ENCODE measurements at regions of chr16 and their contacts with region 1.

Region 1: DNA sequence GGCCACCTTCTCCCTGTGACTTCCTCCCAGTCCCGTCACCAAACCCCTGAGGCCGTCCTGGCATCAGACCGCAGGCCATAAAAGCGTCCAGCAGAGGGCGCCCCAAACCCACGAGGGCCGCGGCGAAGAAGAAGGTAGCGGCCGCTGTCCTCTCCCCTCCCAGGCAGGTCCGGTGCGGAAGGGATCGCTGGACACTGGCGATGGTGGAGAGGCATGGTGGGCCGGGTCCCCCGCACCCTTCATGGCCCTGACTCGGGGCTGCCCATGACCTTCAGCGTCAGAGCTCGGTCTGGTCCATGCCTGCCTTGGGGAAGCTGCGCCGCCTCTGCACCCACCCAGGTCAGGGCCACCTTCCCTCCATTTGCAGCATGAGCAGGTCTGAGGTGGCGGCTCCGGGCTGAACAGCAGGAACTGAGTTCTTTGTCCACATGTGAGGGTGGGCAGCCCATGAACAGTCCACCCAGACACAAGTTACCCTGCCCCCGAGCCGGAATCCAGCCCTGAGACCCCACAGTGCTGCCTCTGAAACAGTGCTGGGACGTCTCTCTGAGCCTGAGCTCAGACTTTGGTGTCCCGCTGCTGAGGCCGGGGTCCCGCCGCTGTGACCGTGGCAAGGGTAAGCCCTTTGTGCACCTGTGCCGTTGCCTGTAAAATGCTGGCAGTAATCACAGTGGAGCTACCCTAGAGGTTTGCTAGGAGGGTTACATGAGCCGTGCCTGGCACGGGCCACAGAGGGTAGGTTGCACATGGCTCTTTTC is 40.8 kb upstream of the CMIP start:
- DNase-seq: no peak
- H3K4me3 ChIP-seq: peak overlapping the region in 1 of 2 donors; percentile 40
- H3K27ac ChIP-seq: no peak overlapping the region
- H3K4me1 ChIP-seq: peaks cover 10% of the 10 kb centered on the region
- H3K27me3 ChIP-seq: no peaks in the 10 kb centered on the region
- CTCF ChIP-seq: peak; percentile 90 to 95 (median 93)
- POLR2A ChIP-seq: no peak

Region 2: DNA sequence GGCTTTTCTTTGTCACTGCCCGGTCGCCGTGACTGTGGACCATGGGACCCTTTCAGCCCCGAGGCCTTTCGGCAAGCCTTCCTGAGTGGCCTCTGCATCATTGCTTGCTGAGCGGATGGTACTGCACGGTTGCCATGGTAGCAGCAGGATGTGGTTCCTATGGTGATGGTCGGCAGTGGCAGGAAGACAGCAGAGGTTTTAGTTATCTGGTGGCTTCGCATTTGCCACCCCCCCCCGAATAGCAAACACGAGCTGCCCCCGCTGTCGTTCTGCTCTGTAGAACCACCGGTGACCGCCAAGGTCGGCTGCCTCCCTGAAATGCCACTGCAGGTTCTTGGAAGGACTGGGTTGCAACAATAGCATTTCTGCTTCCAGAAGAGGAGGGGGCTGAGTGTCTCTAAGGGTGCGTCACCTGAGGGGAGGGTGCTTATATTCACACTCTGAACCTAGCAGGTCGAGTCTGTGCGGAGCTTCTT is 117.4 kb after region 1 on chr16:
- intact Hi-C with region 1: no loop called
- DNase-seq: no peak
- H3K4me3 ChIP-seq: no peak overlapping the region
- H3K27ac ChIP-seq: no peak overlapping the region
- H3K4me1 ChIP-seq: peaks cover 54% of the 10 kb centered on the region
- H3K27me3 ChIP-seq: no peaks in the 10 kb centered on the region
- CTCF ChIP-seq: no peak
- POLR2A ChIP-seq: no peak

Region 3: GRCh38 chr16:81616321-81617055 is 212.7 kb after region 1 on chr16:
- intact Hi-C with region 1: loop called (anchors 10 kb)
- DNase-seq: no peak
- H3K4me3 ChIP-seq: no peak overlapping the region
- H3K27ac ChIP-seq: peak overlapping the region; percentile 77
- H3K4me1 ChIP-seq: peaks cover 84% of the 10 kb centered on the region
- H3K27me3 ChIP-seq: no peaks in the 10 kb centered on the region
- CTCF ChIP-seq: no peak
- POLR2A ChIP-seq: no peak

Region 4: GRCh38 chr16:81723098-81723723 is 319.4 kb after region 1 on chr16:
- intact Hi-C with region 1: loop called (anchors 5 kb)
- DNase-seq: peak in 1 of 2 donors; percentile 86
- H3K4me3 ChIP-seq: no peak overlapping the region
- H3K27ac ChIP-seq: no peak overlapping the region
- H3K4me1 ChIP-seq: peaks cover 20% of the 10 kb centered on the region
- H3K27me3 ChIP-seq: no peaks in the 10 kb centered on the region
- CTCF ChIP-seq: peak; percentile 47 to 91 (median 73)
- POLR2A ChIP-seq: no peak

Region 5: GRCh38 chr16:81737885-81738786 is 334.3 kb after region 1 on chr16:
- intact Hi-C with region 1: loop called (anchors 5 kb)
- DNase-seq: no peak
- H3K4me3 ChIP-seq: peak overlapping the region in 1 of 2 donors; percentile 25
- H3K27ac ChIP-seq: peak overlapping the region; percentile 74
- H3K4me1 ChIP-seq: peaks cover 12% of the 10 kb centered on the region
- H3K27me3 ChIP-seq: no peaks in the 10 kb centered on the region
- CTCF ChIP-seq: peak; percentile 73 to 93 (median 91)
- POLR2A ChIP-seq: no peak

Region 6: DNA sequence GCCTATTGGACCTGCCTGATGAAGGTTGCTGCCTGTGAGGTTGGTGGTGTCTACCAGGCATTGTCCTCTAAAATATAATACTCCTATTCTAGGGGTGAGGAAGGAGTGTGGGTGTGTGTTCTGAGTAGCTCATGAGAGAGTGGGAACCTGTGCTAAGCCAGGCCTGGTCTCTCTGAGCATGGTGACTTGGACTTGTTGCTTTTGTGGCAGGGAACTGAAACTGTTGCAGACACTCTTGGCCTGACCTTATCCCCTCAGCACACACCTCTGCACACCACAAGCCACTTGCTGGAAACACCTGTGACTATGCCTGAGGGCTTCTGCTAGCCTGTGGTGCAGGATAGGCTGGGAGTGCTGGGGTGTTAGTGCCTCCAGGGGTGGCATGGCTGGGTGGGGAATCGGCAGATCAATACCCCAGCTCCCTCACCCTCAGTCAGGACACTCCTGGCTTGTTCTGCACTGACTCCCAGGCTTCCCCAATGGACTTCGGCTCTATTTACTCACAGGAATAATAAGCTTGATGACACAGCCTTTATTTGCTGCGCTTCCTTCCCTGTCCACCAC is 405.2 kb after region 1 on chr16:
- intact Hi-C with region 1: no loop called
- DNase-seq: no peak
- H3K4me3 ChIP-seq: no peak overlapping the region
- H3K27ac ChIP-seq: no peak overlapping the region
- H3K4me1 ChIP-seq: no peaks in the 10 kb centered on the region
- H3K27me3 ChIP-seq: no peaks in the 10 kb centered on the region
- CTCF ChIP-seq: no peak
- POLR2A ChIP-seq: no peak